H1 (cell line): ENCODE measurements at regions of chr9 and their contacts with region 1.

Region 1: GRCh38 chr9:130860458-130861316 is 25.6 kb downstream of the ABL1 start:
- DNase-seq: no peak
- H3K4me3 ChIP-seq: no peak overlapping the region
- H3K27ac ChIP-seq: no peak overlapping the region
- H3K4me1 ChIP-seq: 0 out of 7 replicates have a peak, but pooled peaks cover 0 to 3% (median 0%) of the 10 kb centered on the region in 4 experiments
- H3K27me3 ChIP-seq: no peaks in the 10 kb centered on the region
- CTCF ChIP-seq: peak in 1 of 3 experiments; percentile 21; a peak in 1 of 4 replicates
- EP300 ChIP-seq: no peak
- POLR2A ChIP-seq: no peak
- RAD21 ChIP-seq: peak; percentile 15 to 17; a peak in 2 of 4 replicates

Region 2: DNA sequence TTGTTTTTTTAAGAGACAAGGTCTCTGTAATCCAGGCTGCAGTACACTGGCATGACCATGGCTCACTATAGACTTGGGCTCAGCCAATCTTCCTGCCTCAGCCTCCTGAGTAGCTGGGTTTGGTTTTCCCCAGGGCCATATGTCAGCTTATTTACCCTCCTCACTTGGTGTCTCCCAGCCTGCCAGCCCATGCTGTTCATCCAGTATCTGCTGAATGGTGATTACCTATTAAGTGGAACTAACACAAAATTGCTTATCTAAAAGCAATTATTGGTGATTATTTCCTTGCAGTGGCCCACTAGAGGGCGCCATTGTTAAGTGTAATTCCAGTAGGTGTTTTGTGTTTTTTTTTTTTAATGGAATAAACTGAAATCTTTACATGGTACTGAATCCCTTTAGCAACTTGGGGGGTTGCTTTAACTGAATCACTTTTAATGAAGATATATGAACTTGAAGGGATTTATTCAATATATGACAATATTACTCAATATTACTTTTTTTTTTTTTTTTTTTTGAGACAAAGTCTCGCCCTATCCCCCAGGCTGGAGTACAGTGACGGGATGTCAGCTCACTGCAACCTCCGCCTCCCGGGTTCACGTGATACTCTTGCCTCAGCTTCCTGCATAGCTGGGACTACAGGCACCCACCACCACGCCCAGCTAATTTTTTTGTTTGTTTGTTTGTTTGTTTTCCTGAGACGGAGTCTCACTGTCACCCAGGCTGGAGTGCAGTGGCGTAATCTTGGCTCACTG is 153.3 kb before region 1 on chr9:
- CTCF ChIA-PET with region 1: interaction called, 317 read pairs
- POLR2A ChIA-PET with region 1: interaction called, 11 read pairs
- DNase-seq: peak in 1 of 2 experiments; percentile 73
- H3K4me3 ChIP-seq: no peak overlapping the region
- H3K27ac ChIP-seq: no peak overlapping the region
- H3K4me1 ChIP-seq: no peaks in the 10 kb centered on the region
- H3K27me3 ChIP-seq: no peaks in the 10 kb centered on the region
- CTCF ChIP-seq: peak in 2 of 3 experiments; percentile 47 to 50; a peak in 2 of 4 replicates
- EP300 ChIP-seq: no peak
- POLR2A ChIP-seq: no peak
- RAD21 ChIP-seq: peak; percentile 70 to 71

Region 3: GRCh38 chr9:130842545-130842944 is 18.1 kb before region 1 on chr9:
- CTCF ChIA-PET with region 1: interaction called, 26 read pairs
- POLR2A ChIA-PET with region 1: interaction called, 8 read pairs
- DNase-seq: no peak
- H3K4me3 ChIP-seq: no peak overlapping the region
- H3K27ac ChIP-seq: no peak overlapping the region
- H3K4me1 ChIP-seq: peaks cover 5 to 33% (median 16%) of the 10 kb centered on the region in 4 experiments
- H3K27me3 ChIP-seq: no peaks in the 10 kb centered on the region
- CTCF ChIP-seq: no peak
- EP300 ChIP-seq: no peak
- POLR2A ChIP-seq: no peak
- RAD21 ChIP-seq: no peak

Region 4: GRCh38 chr9:130847327-130848217 is 13.1 kb before region 1 on chr9:
- CTCF ChIA-PET with region 1: interaction called, 26 read pairs
- POLR2A ChIA-PET with region 1: interaction called, 8 read pairs
- DNase-seq: no peak
- H3K4me3 ChIP-seq: no peak overlapping the region; a peak in 2 of 8 replicates
- H3K27ac ChIP-seq: peak overlapping the region; percentile 62
- H3K4me1 ChIP-seq: peaks cover 4 to 24% (median 13%) of the 10 kb centered on the region in 4 experiments
- H3K27me3 ChIP-seq: no peaks in the 10 kb centered on the region
- CTCF ChIP-seq: peak; percentile 18 to 44 (median 30); a peak in 3 of 4 replicates
- EP300 ChIP-seq: no peak
- POLR2A ChIP-seq: no peak
- RAD21 ChIP-seq: 0 out of 4 replicates have a peak, but pooled peaks of 1 of the 2 experiments have one; percentile 12

Region 5: DNA sequence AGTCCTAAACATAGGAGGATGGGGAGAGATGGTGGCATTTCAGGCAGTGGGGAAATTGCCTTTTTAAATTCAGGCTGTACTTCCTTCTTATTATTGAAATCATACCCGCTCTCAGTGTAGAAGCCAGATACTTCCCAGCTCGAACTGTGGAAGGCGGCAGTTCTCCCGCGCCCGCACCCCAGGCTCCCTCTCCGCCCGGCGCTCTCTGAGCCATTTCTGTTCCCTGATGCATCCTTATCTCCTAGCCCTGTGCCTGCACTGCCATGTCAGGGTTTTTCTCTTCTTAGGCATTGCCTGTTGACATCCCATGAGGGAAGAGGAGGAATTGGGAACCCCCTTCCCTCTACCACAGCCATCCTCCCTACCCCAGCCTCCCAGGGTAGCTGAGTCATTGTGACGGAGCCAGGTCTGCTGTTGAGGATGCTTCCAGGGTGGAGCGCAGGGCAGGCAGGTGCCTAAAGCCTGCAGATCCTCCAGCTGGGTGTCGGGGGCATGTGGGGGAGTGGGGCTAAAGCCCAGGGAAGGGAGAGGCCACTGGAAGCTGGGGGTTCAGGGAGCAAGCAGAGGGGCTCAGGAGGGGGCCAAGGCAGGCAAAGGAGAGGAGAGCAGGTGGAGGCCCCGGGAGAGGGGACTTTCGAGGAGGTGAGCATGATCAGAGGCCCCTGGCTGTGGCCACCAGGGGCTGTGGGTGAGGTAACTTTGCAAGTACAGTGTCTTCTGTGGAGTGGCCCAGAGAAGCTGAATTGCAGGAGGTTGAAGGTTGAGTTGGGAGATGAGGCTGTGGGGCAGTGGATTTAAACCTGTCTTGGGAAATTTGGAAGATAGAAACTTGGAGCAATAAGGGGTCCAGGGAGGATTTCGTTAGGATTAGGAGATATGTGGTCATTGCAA is 164.5 kb after region 1 on chr9:
- CTCF ChIA-PET with region 1: no interaction called
- POLR2A ChIA-PET with region 1: no interaction called
- DNase-seq: no peak
- H3K4me3 ChIP-seq: no peak overlapping the region
- H3K27ac ChIP-seq: no peak overlapping the region; the same call in 1 of the 2 replicates
- H3K4me1 ChIP-seq: peaks cover 0 to 2% (median 0%) of the 10 kb centered on the region in 4 experiments; a peak in 2 of 7 replicates
- H3K27me3 ChIP-seq: no peaks in the 10 kb centered on the region
- CTCF ChIP-seq: no peak
- EP300 ChIP-seq: no peak
- POLR2A ChIP-seq: no peak
- RAD21 ChIP-seq: no peak